ENCODE measurements at regions of chr7 and their contacts with region 1.

Region 1: GRCh38 chr7:1579481-1580421 is 9.9 kb upstream of the PSMG3 start:
- DNase-seq: peak; percentile 50 to 83 (median 64)
- ATAC-seq: peak; percentile 99
- H3K4me3 ChIP-seq: no peak overlapping the region
- H3K4me3 Mint-ChIP-seq: peak overlapping the region; percentile 3
- H3K27ac ChIP-seq: no peak overlapping the region
- H3K27ac Mint-ChIP-seq: no peak overlapping the region
- H3K4me1 ChIP-seq: peaks cover 9% of the 10 kb centered on the region
- H3K4me1 Mint-ChIP-seq: peaks cover 13% of the 10 kb centered on the region
- H3K27me3 ChIP-seq: no peaks in the 10 kb centered on the region
- H3K27me3 Mint-ChIP-seq: no peaks in the 10 kb centered on the region
- CTCF ChIP-seq: peak; percentile 89

Region 2: DNA sequence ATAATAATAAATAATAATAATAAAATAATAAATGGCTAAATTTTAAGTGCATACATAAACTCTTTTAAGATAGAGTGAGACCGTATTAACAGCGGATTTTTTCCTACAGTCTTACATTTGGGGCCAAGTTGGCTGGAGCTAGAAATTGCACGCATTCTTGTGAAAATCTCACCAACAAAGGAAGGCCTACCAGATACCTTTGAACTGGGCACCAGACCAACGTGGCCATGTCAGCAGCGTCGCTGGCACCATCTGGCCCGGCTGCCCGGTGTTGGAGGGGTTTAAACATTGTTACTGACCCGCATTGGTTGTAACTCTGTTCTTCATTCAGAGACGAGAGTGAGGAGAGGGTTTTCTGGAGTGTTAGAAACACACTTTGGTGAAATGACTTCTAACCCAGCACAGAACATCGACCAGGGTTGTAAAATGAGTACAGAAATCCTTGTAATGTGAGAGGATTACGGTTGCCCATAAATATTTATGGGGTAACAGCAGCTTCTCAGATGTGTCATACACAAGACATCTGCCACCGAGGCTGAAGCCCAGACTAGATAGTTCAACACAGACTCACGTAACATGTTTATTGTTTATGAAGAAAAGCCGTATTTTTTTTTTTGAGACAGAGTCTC is 381.6 kb before region 1 on chr7:
- CTCF ChIA-PET with region 1: no interaction called
- POLR2A ChIA-PET with region 1: no interaction called
- intact Hi-C with region 1: no loop called
- DNase-seq: no peak
- ATAC-seq: no peak
- H3K4me3 ChIP-seq: no peak overlapping the region
- H3K4me3 Mint-ChIP-seq: no peak overlapping the region
- H3K27ac ChIP-seq: no peak overlapping the region
- H3K27ac Mint-ChIP-seq: no peak overlapping the region
- H3K4me1 ChIP-seq: no peaks in the 10 kb centered on the region
- H3K4me1 Mint-ChIP-seq: no peaks in the 10 kb centered on the region
- H3K27me3 ChIP-seq: peaks cover 0 to 3% of the 10 kb centered on the region in 2 experiments
- H3K27me3 Mint-ChIP-seq: peaks cover 3% of the 10 kb centered on the region
- CTCF ChIP-seq: no peak

Region 3: DNA sequence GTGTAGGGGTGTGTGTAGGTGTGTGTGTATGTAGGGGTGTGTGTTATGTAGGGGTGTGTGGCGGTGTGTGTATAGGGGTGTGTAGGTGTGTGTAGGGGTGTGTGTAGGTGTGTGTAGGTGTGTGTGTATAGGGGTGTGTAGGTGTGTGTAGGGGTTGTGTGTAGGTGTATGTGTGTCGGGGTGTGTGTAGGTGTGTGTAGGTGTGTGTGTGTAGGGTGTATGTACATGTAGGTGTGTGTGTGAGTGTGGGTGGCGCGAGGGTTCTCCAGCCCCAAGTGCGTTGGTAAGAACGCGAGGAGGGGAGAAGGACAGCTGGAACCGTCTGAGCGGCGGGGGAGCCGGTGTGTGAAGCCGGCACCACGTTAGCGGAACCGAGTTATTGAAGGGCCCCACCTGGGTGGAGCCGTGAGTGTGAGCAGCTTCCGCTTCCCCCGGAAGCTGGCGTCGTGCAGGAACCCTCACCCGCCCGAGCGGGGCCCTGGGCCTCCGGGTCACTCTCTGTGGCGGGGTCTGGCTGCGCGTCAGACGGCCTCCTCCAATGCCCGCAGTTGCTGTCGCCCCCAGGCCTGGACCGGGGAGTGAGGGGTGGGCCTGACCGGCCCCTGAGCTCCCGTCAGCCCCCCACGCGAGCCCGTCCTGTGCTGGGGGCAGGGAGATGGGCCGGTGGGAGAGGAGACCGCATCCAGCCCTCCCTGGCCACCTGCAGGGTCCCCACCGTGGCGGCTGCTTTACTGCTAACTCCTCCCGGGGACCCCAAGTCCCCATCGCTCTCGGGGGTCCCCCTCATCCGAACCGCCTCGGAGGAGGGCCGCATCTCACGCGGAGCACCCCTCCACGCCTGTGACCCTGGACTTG is 39.6 kb after region 1 on chr7:
- CTCF ChIA-PET with region 1: no interaction called
- POLR2A ChIA-PET with region 1: no interaction called
- intact Hi-C with region 1: no loop called
- DNase-seq: peak in 1 of 14 experiments; percentile 7
- ATAC-seq: no peak
- H3K4me3 ChIP-seq: no peak overlapping the region
- H3K4me3 Mint-ChIP-seq: no peak overlapping the region
- H3K27ac ChIP-seq: no peak overlapping the region
- H3K27ac Mint-ChIP-seq: no peak overlapping the region
- H3K4me1 ChIP-seq: no peaks in the 10 kb centered on the region
- H3K4me1 Mint-ChIP-seq: no peaks in the 10 kb centered on the region
- H3K27me3 ChIP-seq: no peaks in the 10 kb centered on the region
- H3K27me3 Mint-ChIP-seq: no peaks in the 10 kb centered on the region
- CTCF ChIP-seq: no peak

Region 4: DNA sequence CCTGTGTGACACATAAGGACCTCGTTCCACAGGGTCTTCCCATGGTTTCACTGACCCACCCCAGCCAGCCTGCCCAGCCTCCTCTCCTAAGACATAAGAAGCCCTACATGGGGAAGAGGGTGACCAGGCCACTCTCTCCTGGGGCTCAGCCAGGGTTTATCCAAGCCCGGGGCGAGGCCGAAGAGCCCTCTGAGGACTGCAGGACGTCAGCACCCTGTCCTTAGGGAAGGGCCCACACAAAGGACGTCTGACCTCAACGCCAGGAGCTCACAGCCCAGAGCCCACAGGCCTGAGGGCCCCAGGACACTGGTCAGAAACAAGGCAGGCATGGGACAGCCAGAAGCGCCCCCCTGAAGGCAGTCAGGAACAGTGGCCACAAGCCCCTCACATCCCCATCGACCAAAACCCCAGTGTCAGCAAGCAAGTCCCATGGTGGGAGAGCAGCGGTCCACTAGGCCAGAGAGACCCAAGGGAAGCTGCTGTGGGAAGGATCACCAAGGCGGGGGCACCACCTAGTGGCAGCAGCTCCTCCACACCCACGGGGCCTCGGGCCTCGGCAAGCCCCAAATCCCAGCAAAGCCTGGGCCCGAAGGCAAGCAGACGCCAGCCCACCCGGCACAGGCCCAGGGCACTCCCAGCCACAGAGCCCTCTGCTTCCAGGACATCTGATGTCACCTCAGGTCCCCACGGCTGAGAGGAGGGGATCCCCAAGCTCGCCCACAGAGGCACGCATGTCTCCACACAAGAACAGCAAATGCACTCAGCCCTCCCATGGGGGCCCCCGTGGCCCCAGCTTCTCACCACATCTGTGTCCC is 629.6 kb after region 1 on chr7:
- CTCF ChIA-PET with region 1: no interaction called
- POLR2A ChIA-PET with region 1: no interaction called
- intact Hi-C with region 1: loop called in 1 of 2 experiments (anchors 2 kb)
- DNase-seq: peak; percentile 11 to 61 (median 32)
- ATAC-seq: peak; percentile 61
- H3K4me3 ChIP-seq: no peak overlapping the region
- H3K4me3 Mint-ChIP-seq: no peak overlapping the region
- H3K27ac ChIP-seq: no peak overlapping the region
- H3K27ac Mint-ChIP-seq: no peak overlapping the region
- H3K4me1 ChIP-seq: peaks cover 2% of the 10 kb centered on the region
- H3K4me1 Mint-ChIP-seq: peaks cover under 1% of the 10 kb centered on the region
- H3K27me3 ChIP-seq: no peaks in the 10 kb centered on the region
- H3K27me3 Mint-ChIP-seq: no peaks in the 10 kb centered on the region
- CTCF ChIP-seq: peak; percentile 33

Region 5: GRCh38 chr7:2369139-2369538 is 789.4 kb after region 1 on chr7:
- CTCF ChIA-PET with region 1: no interaction called
- POLR2A ChIA-PET with region 1: no interaction called
- intact Hi-C with region 1: loop called in 1 of 2 experiments (anchors 5 kb)
- DNase-seq: no peak
- ATAC-seq: no peak
- H3K4me3 ChIP-seq: no peak overlapping the region
- H3K4me3 Mint-ChIP-seq: no peak overlapping the region
- H3K27ac ChIP-seq: no peak overlapping the region
- H3K27ac Mint-ChIP-seq: no peak overlapping the region
- H3K4me1 ChIP-seq: no peaks in the 10 kb centered on the region
- H3K4me1 Mint-ChIP-seq: no peaks in the 10 kb centered on the region
- H3K27me3 ChIP-seq: no peaks in the 10 kb centered on the region
- H3K27me3 Mint-ChIP-seq: no peaks in the 10 kb centered on the region
- CTCF ChIP-seq: no peak

Region 6: GRCh38 chr7:2431260-2431867 is 851.6 kb after region 1 on chr7:
- CTCF ChIA-PET with region 1: interaction called, 10 read pairs
- POLR2A ChIA-PET with region 1: no interaction called
- intact Hi-C with region 1: no loop called
- DNase-seq: peak in 12 of 14 experiments; percentile 15 to 68 (median 35)
- ATAC-seq: peak; percentile 64
- H3K4me3 ChIP-seq: no peak overlapping the region
- H3K4me3 Mint-ChIP-seq: no peak overlapping the region
- H3K27ac ChIP-seq: no peak overlapping the region
- H3K27ac Mint-ChIP-seq: no peak overlapping the region
- H3K4me1 ChIP-seq: peaks cover 4% of the 10 kb centered on the region
- H3K4me1 Mint-ChIP-seq: peaks cover 6% of the 10 kb centered on the region
- H3K27me3 ChIP-seq: no peaks in the 10 kb centered on the region
- H3K27me3 Mint-ChIP-seq: no peaks in the 10 kb centered on the region
- CTCF ChIP-seq: peak; percentile 59

Region 7: GRCh38 chr7:2471396-2471795 is 891.6 kb after region 1 on chr7:
- CTCF ChIA-PET with region 1: interaction called, 3 read pairs
- POLR2A ChIA-PET with region 1: no interaction called
- intact Hi-C with region 1: loop called in 1 of 2 experiments (anchors 1 kb)
- DNase-seq: no peak
- ATAC-seq: no peak
- H3K4me3 ChIP-seq: no peak overlapping the region
- H3K4me3 Mint-ChIP-seq: no peak overlapping the region
- H3K27ac ChIP-seq: no peak overlapping the region
- H3K27ac Mint-ChIP-seq: no peak overlapping the region
- H3K4me1 ChIP-seq: peaks cover 7% of the 10 kb centered on the region
- H3K4me1 Mint-ChIP-seq: peaks cover 9% of the 10 kb centered on the region
- H3K27me3 ChIP-seq: no peaks in the 10 kb centered on the region
- H3K27me3 Mint-ChIP-seq: peaks cover 8% of the 10 kb centered on the region
- CTCF ChIP-seq: no peak

Measured in CD4-positive, alpha-beta T cell (primary cell).